ENCODE measurements at regions of chr15 and their contacts with region 1.

Region 1: DNA sequence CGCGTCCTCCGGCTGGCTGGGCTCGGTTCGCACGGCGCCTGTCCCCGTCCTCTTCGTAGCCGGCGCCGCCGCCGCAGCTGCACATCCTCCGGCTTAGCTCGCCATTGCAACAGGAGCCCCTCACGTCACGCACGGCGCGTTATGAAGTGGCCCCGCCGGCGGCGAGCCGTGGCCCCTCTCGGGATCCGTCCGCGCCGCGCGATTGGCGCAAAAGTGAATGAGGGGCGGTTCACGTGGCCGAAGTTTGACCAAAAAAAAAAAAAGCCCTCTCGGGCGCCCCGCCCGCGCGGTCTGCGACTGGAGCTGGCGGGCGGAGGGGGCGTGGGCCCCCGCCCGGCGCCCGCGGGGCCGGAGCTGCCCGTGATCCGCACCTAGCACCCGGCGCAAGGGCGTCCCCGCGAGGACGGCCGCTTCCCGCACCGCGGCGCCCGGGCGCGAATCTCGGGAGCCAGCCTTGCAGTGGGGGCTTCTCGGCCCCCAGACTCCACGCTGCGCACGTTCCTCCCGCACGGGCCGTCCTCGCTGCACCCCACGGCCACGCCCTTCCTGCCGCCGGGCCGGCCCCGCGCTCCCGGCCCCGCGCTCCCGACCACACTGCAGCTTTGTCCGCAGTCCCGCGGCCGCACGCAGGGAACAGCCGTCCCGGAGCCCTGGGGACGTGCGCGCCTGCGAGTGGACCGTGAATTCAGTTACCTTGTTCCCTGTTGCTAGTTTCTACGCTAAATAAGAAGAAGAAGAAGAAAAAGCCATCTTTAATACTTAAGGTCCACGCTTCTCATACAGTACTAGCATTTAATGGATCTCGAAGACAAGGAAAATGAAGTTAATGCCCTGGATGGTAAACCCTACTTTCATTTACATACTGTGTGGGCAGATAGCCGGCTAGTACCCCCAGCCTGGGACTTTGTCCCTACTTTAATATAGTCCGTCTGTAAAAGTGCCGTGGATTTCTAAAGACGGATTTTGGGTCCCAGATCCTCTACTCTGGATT is at the start of gene CHSY1:
- DNase-seq: peak; percentile 57
- ATAC-seq: peak; percentile 80
- H3K4me3 ChIP-seq: peak within 1 kb of the TSS; percentile 91
- H3K27ac ChIP-seq: peak within 1 kb of the TSS; percentile 43
- H3K4me1 ChIP-seq: no peaks in the 10 kb centered on the region; the same call in 1 of the 2 replicates
- H3K27me3 ChIP-seq: no peaks in the 10 kb centered on the region
- CTCF ChIP-seq: peak; percentile 17 to 47 (median 17); a peak in 3 of 6 replicates
- EP300 ChIP-seq: no peak
- POLR2A ChIP-seq: peak; percentile 87
- RAD21 ChIP-seq: peak; percentile 50; the same call in 1 of the 2 replicates
- polyA plus RNA-seq, gene CHSY1: 5.1 to 10.0 TPM

Region 2: GRCh38 chr15:101088788-101089583 is 163.1 kb before region 1 on chr15:
- CTCF ChIA-PET with region 1: interaction called, 126 read pairs
- POLR2A ChIA-PET with region 1: interaction called, 3 read pairs
- RAD21 ChIA-PET with region 1: interaction called, 69 read pairs
- SMC1A ChIA-PET with region 1: interaction called, 30 read pairs
- in situ Hi-C with region 1: no loop called
- intact Hi-C with region 1: no loop called
- DNase-seq: no peak
- ATAC-seq: peak; percentile 98
- H3K4me3 ChIP-seq: no peak overlapping the region
- H3K27ac ChIP-seq: no peak overlapping the region
- H3K4me1 ChIP-seq: no peaks in the 10 kb centered on the region
- H3K27me3 ChIP-seq: no peaks in the 10 kb centered on the region
- CTCF ChIP-seq: peak; percentile 94 to 98 (median 97)
- EP300 ChIP-seq: no peak
- POLR2A ChIP-seq: no peak
- RAD21 ChIP-seq: peak; percentile 80

Region 3: GRCh38 chr15:101121511-101122090 is 130.5 kb before region 1 on chr15:
- CTCF ChIA-PET with region 1: interaction called, 60 read pairs
- POLR2A ChIA-PET with region 1: interaction called, 7 read pairs
- RAD21 ChIA-PET with region 1: interaction called, 26 read pairs
- SMC1A ChIA-PET with region 1: interaction called, 119 read pairs
- in situ Hi-C with region 1: no loop called
- intact Hi-C with region 1: loop called (anchors 2 kb)
- DNase-seq: no peak
- ATAC-seq: peak; percentile 79
- H3K4me3 ChIP-seq: no peak overlapping the region
- H3K27ac ChIP-seq: no peak overlapping the region
- H3K4me1 ChIP-seq: peaks cover 30% of the 10 kb centered on the region
- H3K27me3 ChIP-seq: no peaks in the 10 kb centered on the region; a peak in 1 of 4 replicates
- CTCF ChIP-seq: peak; percentile 32 to 56 (median 33); a peak in 5 of 6 replicates
- EP300 ChIP-seq: no peak
- POLR2A ChIP-seq: no peak
- RAD21 ChIP-seq: peak; percentile 54